Colonic mucosa (tissue), 4 donors: ENCODE measurements at regions of chr4 and their contacts with region 1.

Region 1: DNA sequence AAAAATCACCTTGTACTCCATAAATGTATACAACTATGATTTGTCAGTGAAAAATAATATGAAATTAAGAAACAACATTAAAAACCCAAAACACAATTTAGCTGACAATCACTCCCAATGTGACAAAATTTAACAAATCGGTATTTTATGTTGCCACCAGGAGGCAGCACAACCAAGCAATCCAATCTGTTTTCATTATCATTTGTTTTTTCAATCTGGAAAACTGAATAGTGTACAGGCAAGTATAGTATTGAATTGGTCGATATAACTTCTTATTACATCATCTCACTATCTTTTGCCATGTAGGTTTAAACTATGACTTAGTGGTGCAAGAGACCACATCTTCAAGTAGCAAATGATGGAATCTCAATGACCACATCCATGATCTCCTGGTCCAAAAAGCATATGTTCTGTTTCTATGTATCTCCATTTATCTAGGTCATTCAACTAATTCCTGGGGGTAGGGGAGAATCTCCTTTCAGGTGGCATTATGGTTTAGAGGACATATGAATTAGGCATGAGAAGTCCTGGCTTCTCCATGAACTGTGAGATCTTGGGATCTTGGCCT is 112.9 kb upstream of the AGA start:
- DNase-seq: peak; percentile 27
- H3K4me3 ChIP-seq: no peak overlapping the region
- H3K27ac ChIP-seq: no peak overlapping the region
- H3K4me1 ChIP-seq: no peaks in the 10 kb centered on the region
- H3K27me3 ChIP-seq: no peaks in the 10 kb centered on the region
- CTCF ChIP-seq: peak; percentile 47

Region 2: GRCh38 chr4:177293208-177294033 is 261.7 kb before region 1 on chr4:
- intact Hi-C with region 1: no loop called
- DNase-seq: no peak
- H3K4me3 ChIP-seq: no peak overlapping the region
- H3K27ac ChIP-seq: no peak overlapping the region
- H3K4me1 ChIP-seq: no peaks in the 10 kb centered on the region
- H3K27me3 ChIP-seq: no peaks in the 10 kb centered on the region
- CTCF ChIP-seq: no peak

Region 3: DNA sequence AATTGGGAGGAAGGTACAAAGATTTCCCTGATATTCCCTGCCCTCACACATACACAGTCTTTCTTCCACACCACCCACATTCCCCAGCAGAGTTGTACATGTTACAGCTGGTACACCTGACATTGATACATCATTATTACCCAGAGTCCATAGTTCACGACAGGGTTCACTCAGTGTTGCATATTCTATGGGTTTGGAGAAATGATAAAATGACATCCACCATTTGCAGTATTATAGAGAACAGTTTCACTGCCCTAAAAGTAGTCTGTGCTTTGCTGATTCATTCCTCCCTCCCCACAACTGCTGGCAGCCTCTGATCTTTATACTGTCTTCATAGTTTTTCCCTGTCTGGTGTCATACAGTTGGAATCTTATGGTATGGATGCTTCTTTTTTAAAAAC is 127.9 kb before region 1 on chr4:
- intact Hi-C with region 1: no loop called
- DNase-seq: no peak
- H3K4me3 ChIP-seq: no peak overlapping the region
- H3K27ac ChIP-seq: no peak overlapping the region
- H3K4me1 ChIP-seq: no peaks in the 10 kb centered on the region
- H3K27me3 ChIP-seq: no peaks in the 10 kb centered on the region
- CTCF ChIP-seq: no peak

Region 4: GRCh38 chr4:177809791-177810190 is 254.7 kb after region 1 on chr4:
- intact Hi-C with region 1: no loop called
- DNase-seq: no peak
- H3K4me3 ChIP-seq: no peak overlapping the region
- H3K27ac ChIP-seq: no peak overlapping the region
- H3K4me1 ChIP-seq: no peaks in the 10 kb centered on the region
- H3K27me3 ChIP-seq: no peaks in the 10 kb centered on the region
- CTCF ChIP-seq: no peak

Region 5: GRCh38 chr4:178395798-178396197 is 840.7 kb after region 1 on chr4:
- intact Hi-C with region 1: loop called (anchors 10 kb)
- DNase-seq: no peak
- H3K4me3 ChIP-seq: no peak overlapping the region
- H3K27ac ChIP-seq: no peak overlapping the region
- H3K4me1 ChIP-seq: no peaks in the 10 kb centered on the region
- H3K27me3 ChIP-seq: no peaks in the 10 kb centered on the region
- CTCF ChIP-seq: peak; percentile 31

Region 6: DNA sequence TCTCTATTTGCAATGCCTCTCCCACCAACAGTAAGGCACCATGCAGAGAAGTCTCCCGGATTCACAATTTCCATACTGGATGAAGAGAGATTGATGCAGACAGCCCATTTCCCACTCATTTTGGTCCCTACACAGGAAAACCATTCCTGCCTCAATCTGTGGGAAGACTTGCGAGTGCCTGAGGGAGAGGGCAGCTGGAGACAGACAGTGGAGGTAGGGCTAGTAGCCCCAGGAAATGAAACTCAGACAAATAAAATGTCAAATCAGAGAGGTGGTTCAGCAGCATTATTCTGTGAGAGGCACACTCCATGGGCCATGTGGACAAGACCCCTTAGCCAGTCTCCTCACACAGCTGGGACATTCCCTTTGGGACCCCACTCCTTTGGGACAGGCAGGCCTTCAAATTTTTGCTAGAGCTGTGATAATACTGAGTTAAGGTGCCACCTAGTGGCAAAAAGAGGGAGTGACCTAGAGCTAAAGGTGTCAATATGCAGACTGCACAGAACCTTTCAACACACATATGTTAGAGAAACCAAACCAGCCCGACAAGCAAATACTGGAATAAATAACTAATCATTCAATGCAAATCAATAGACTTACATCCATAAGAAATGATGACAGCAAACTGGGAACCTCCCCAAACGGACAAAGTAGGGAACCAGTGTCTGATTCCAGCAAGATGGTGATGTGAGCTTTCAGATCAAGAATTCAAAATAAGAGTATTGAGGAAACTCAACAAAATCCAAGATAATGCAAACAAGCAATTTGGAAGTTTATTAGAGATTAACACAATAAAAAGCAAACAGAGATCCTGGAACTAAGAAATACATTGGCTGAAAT is 1752.4 kb after region 1 on chr4:
- intact Hi-C with region 1: loop called (anchors 5 kb)
- DNase-seq: peak; percentile 41
- H3K4me3 ChIP-seq: no peak overlapping the region
- H3K27ac ChIP-seq: no peak overlapping the region
- H3K4me1 ChIP-seq: no peaks in the 10 kb centered on the region
- H3K27me3 ChIP-seq: no peaks in the 10 kb centered on the region
- CTCF ChIP-seq: peak; percentile 41